Head of caudate nucleus (tissue), 42 donors: ENCODE measurements at regions of chr9 and their contacts with region 1.

Region 1: GRCh38 chr9:6015278-6016157 is at the start of gene RANBP6:
- DNase-seq: peak; percentile 89 to 98 (median 96)

Region 2: GRCh38 chr9:5832543-5833529 is 182.7 kb before region 1 on chr9 and contains the start of gene ERMP1:
- intact Hi-C with region 1: loop called (anchors 10 kb)
- DNase-seq: peak; percentile 86 to 97 (median 94)

Region 3: GRCh38 chr9:5931657-5932056 is 83.9 kb before region 1 on chr9:
- intact Hi-C with region 1: no loop called
- DNase-seq: no peak